ENCODE measurements at regions of chr20 and their contacts with region 1.

Region 1: GRCh38 chr20:63223221-63224207 is 7.6 kb upstream of the YTHDF1 start:
- DNase-seq: peak in 1 of 2 experiments; percentile 86
- H3K4me3 ChIP-seq: no peak overlapping the region
- H3K27ac ChIP-seq: no peak overlapping the region
- H3K4me1 ChIP-seq: peaks cover 0 to 6% (median 3%) of the 10 kb centered on the region in 4 experiments; a peak in 5 of 7 replicates
- H3K27me3 ChIP-seq: peaks cover 0 to 3% (median 0%) of the 10 kb centered on the region in 4 experiments; a peak in 2 of 7 replicates
- CTCF ChIP-seq: peak; percentile 85 to 87 (median 87)
- EP300 ChIP-seq: no peak
- POLR2A ChIP-seq: no peak
- RAD21 ChIP-seq: peak; percentile 85 to 89

Region 2: GRCh38 chr20:62793912-62794724 is 429.4 kb before region 1 on chr20:
- CTCF ChIA-PET with region 1: no interaction called
- POLR2A ChIA-PET with region 1: no interaction called
- DNase-seq: peak; percentile 86 to 98
- H3K4me3 ChIP-seq: peak overlapping the region; percentile 21 to 65 (median 46); a peak in 7 of 8 replicates
- H3K27ac ChIP-seq: no peak overlapping the region
- H3K4me1 ChIP-seq: peaks cover 0 to 11% (median 6%) of the 10 kb centered on the region in 4 experiments; a peak in 4 of 7 replicates
- H3K27me3 ChIP-seq: peaks cover 0 to 18% (median 11%) of the 10 kb centered on the region in 4 experiments; a peak in 5 of 7 replicates
- CTCF ChIP-seq: no peak
- EP300 ChIP-seq: no peak
- POLR2A ChIP-seq: no peak
- RAD21 ChIP-seq: no peak

Region 3: DNA sequence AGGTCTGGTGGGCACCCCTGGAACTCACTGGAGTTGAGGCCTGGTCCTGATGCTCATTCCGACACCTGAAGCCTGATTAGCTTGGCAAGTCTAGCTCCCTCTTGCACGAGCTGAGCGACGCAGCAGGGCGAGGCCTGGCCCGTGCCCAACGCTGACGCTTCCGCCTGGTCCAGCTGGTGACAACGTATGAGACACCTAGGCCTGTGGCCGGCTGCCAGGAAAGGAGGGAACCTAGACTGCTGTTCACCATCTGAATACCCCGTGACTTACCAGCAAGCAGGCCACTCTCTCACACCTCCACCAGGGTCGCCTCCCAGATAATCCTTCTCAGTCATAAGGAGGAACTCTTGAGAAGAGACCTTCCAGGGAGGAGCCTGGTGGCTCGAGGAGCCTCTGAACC is 32.1 kb before region 1 on chr20:
- CTCF ChIA-PET with region 1: interaction called, 49 read pairs
- POLR2A ChIA-PET with region 1: interaction called, 3 read pairs
- DNase-seq: no peak
- H3K4me3 ChIP-seq: no peak overlapping the region
- H3K27ac ChIP-seq: no peak overlapping the region; the same call in 1 of the 2 replicates
- H3K4me1 ChIP-seq: no peaks in the 10 kb centered on the region
- H3K27me3 ChIP-seq: no peaks in the 10 kb centered on the region; a peak in 2 of 7 replicates
- CTCF ChIP-seq: no peak
- EP300 ChIP-seq: no peak
- POLR2A ChIP-seq: no peak
- RAD21 ChIP-seq: no peak

Region 4: GRCh38 chr20:63246490-63247288 is 23.2 kb after region 1 on chr20:
- CTCF ChIA-PET with region 1: interaction called, 199 read pairs
- POLR2A ChIA-PET with region 1: interaction called, 4 read pairs
- DNase-seq: peak in 1 of 2 experiments; percentile 72
- H3K4me3 ChIP-seq: no peak overlapping the region
- H3K27ac ChIP-seq: no peak overlapping the region
- H3K4me1 ChIP-seq: peaks cover 0 to 20% (median 12%) of the 10 kb centered on the region in 4 experiments; a peak in 4 of 7 replicates
- H3K27me3 ChIP-seq: peaks cover 0 to 1% (median under 1%) of the 10 kb centered on the region in 4 experiments; a peak in 4 of 7 replicates
- CTCF ChIP-seq: 0 out of 4 replicates have a peak, but pooled peaks of 1 of the 3 experiments have one; percentile 5
- EP300 ChIP-seq: no peak
- POLR2A ChIP-seq: no peak
- RAD21 ChIP-seq: no peak

Region 5: DNA sequence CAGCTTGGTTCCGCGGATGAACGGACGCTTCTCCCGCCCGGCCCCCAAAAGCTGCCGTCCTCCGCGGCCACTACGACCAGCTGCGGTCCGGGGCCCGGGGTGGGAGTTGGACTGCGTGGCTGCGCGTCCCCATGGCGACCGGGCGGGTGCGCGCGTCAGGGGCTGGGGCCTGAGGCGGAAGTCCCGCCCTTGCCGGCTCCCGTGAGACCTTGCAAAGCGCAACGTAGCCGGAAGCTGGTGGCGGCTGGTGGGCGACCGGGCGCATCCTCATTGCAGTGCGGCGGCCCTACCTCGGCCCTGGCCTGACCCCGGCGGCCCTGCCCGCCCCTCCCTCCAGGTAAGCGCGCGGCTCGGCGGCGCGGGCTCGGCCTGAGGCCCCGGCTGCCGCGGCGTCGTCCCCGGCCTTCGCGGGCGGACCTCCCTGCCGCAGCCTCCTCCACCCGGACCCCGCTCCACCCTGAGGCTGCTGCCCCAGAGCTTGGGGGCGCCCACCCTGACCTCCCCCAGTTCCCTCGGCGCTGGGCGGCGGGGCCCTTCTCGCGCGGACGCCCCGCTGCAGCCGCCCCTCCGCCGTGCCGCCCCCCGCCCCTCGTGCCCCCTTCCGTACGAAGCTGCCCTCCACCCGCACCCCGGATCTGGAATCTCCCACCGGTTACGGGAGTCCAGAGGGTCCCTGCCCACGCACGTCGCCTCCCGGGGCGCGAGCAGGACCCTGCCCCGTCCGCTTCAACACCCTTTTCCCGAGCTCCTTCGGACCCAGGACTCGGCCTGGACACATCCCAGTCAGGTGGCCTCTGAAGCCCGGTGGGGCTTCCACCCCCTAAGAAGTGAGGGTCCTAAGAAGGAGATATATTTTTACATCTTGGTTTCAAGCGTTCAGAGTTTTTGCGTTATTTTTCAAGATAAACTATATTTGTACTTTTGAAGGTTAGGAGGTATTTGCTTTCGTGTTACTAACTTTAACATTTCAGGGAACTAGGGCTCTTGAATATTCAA is 49.4 kb after region 1 on chr20 and contains the start of gene ARFGAP1:
- CTCF ChIA-PET with region 1: interaction called, 63 read pairs
- POLR2A ChIA-PET with region 1: interaction called, 4 read pairs
- DNase-seq: peak in 1 of 2 experiments; percentile 93
- H3K4me3 ChIP-seq: peak within 1 kb of the TSS; percentile 66 to 95 (median 87)
- H3K27ac ChIP-seq: no peak within 1 kb of the TSS; the same call in 1 of the 2 replicates
- H3K4me1 ChIP-seq: peaks cover 0 to 7% (median 1%) of the 10 kb centered on the region in 4 experiments; a peak in 5 of 7 replicates
- H3K27me3 ChIP-seq: 0 out of 7 replicates have a peak, but pooled peaks cover 0 to 2% (median 0%) of the 10 kb centered on the region in 4 experiments
- CTCF ChIP-seq: no peak
- EP300 ChIP-seq: no peak
- POLR2A ChIP-seq: peak in 1 of 2 experiments; percentile 79; a peak in 2 of 3 replicates
- RAD21 ChIP-seq: no peak
- total RNA-seq, gene ARFGAP1: 93.0 and 100 TPM in 2 replicates

Region 6: DNA sequence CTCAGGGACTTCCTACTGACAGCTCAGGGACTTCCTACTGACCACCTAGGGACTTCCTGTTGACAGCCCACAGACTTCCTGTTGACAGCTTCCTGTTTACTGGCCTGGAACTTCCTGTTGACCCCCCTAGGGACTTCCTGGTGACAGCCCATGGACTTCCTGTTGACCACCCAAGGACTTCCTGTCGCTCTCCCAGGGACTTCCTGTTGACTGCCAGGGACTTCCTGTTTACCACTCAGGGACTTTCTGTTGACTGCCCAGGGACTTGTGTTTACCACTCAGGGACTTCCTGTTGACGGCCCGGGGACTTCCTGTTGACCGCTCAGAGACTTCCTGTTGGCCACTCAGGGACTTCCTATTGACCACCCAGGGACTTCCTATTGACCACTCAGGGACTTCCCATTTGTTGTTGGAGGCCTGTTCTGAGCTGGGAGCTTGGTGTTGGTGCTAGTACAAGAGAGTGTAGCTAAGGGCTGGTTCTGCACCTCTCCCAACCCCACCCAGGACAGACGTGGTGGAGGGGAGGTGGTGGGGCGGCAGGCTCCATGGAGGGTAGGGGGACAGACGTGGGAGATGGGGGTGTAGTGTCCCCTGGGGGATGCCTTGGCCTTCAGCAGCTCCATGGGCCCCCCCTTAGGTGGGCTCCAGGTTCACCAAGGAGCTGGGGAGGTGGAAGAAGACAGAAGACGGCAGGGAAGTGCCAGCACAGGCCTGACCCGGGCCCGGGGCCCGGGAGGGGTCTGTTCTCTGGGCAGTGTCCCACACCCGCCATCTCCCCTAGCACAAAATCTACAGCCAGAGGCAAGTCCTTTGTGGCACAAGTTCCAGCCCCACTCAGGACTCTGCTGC is 103.6 kb after region 1 on chr20:
- CTCF ChIA-PET with region 1: interaction called, 10 read pairs
- POLR2A ChIA-PET with region 1: no interaction called
- DNase-seq: no peak
- H3K4me3 ChIP-seq: no peak overlapping the region
- H3K27ac ChIP-seq: no peak overlapping the region
- H3K4me1 ChIP-seq: peaks cover 0 to 5% (median 1%) of the 10 kb centered on the region in 4 experiments; a peak in 3 of 7 replicates
- H3K27me3 ChIP-seq: no peaks in the 10 kb centered on the region
- CTCF ChIP-seq: no peak
- EP300 ChIP-seq: no peak
- POLR2A ChIP-seq: no peak
- RAD21 ChIP-seq: no peak

Region 7: DNA sequence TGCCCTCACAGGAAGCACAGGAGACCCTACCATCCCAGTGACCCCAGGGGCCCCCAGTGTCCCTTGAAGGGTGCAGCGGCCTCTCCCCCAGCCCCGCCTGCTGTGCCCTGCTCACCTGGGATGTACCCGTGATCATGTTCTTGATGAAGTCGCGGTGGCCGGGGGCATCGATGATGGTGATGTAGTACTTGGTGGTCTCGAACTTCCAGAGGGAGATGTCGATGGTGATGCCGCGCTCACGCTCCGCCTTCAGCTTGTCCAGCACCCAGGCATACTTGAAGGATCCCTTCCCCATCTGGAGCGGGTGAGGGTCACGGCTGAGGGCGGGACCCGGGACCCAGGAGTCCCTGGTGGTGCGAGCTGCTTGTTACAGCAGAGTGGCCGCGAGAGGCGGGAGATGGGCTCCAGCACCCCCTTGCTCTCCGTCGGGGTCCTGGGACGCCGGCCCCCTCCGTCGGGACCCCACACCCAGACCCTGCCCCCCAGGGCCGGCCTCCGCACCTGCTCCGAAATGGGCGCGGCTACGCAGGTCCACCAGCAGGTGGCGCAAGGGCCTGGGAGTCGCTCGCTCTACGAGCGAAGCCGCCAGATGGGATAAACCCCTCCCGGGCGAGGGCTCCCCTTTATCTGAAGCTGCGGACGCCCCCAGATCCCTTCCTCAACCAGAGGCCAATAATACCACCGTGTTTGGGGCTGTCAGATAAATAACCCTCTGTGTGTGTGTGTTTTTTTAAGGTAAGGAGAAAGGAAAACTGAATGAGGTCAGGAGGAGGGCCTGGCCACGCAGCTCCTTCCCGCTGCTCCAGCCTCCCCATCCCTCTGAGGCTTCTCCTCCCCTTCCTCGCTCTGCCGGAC is 272.5 kb after region 1 on chr20:
- CTCF ChIA-PET with region 1: no interaction called
- POLR2A ChIA-PET with region 1: no interaction called
- DNase-seq: peak in 1 of 2 experiments; percentile 92
- H3K4me3 ChIP-seq: peak overlapping the region in 2 of 4 experiments; percentile 10 to 41; a peak in 4 of 8 replicates
- H3K27ac ChIP-seq: no peak overlapping the region
- H3K4me1 ChIP-seq: peaks cover 0 to 23% (median 12%) of the 10 kb centered on the region in 4 experiments; a peak in 6 of 7 replicates
- H3K27me3 ChIP-seq: peaks cover 11 to 41% (median 35%) of the 10 kb centered on the region in 4 experiments
- CTCF ChIP-seq: peak; percentile 83 to 88 (median 87)
- EP300 ChIP-seq: no peak
- POLR2A ChIP-seq: no peak
- RAD21 ChIP-seq: peak; percentile 51 to 67; a peak in 3 of 4 replicates

Region 8: DNA sequence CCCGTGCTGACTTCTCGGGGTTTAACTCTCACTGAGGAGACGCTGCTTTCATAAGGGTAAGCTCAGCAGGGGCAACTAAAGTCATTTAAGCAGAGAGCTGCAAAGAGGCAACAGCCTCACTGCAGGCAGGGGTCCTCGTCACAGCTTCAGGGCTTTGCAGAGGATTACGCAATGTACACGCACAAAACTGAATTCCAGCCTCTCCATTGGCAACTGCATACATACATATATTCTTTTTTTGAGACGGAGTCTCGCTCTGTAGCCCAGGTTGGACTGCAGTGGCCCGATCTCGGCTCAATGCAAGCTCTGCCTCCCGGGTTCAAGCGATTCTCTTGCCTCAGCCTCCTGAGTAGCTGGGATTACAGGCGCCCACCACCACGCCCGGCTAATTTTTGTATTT is 401.0 kb after region 1 on chr20:
- CTCF ChIA-PET with region 1: no interaction called
- POLR2A ChIA-PET with region 1: no interaction called
- DNase-seq: no peak
- H3K4me3 ChIP-seq: no peak overlapping the region
- H3K27ac ChIP-seq: no peak overlapping the region
- H3K4me1 ChIP-seq: peaks cover 0 to 3% (median under 1%) of the 10 kb centered on the region in 4 experiments; a peak in 3 of 7 replicates
- H3K27me3 ChIP-seq: no peaks in the 10 kb centered on the region; a peak in 2 of 7 replicates
- CTCF ChIP-seq: no peak
- EP300 ChIP-seq: no peak
- POLR2A ChIP-seq: no peak
- RAD21 ChIP-seq: no peak